ENCODE measurements at regions of chr17 and their contacts with region 1.

Region 1: DNA sequence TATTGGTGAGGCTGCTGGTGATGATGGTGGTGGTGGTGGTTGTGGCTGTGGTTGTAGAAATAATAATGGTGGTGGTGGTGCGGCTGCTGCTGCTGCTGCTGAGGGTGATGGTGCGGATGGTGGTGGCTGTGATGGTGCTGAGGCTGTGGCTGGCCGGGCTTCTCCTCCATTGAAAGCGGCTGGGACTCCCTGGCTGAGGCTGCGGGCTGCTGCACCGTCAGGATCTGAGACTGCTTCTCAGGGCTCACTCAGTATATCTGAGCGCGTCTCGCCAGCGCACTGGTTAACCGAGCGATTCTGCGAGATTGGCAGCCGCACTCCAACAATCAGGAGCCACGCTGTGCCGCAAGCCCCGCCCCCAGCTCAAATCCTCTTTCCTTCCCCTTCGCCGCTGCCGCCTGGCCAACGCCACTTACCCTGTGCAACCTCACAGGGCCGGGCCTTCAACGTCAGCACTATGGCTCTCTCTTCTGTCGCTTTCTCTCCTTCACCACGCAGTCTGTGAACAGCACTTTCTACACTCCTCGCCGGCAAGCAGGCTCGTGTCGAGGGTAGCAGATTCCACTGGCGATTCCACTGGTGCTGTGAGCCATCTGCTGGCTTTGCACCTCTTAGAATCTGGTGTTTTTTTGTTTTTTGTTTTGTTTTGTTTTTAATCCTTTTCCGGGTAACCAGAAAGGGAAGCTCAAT is at the start of gene NUFIP2:
- DNase-seq: peak; percentile 99
- ATAC-seq: peak; percentile 91 to 94
- H3K4me3 ChIP-seq: peak within 1 kb of the TSS; percentile 88 to 97 (median 95)
- H3K27ac ChIP-seq: peak within 1 kb of the TSS; percentile 95 to 100 (median 100)
- H3K4me1 ChIP-seq: peaks cover 26 to 30% of the 10 kb centered on the region in 2 donors
- H3K27me3 ChIP-seq: no peaks in the 10 kb centered on the region
- CTCF ChIP-seq: peak in 1 of 5 experiments; percentile 11
- POLR2A ChIP-seq: peak; percentile 100
- total RNA-seq, gene NUFIP2: 20.0 to 33.7 (median 27.8) TPM

Region 2: GRCh38 chr17:28644985-28645939 is 648.8 kb before region 1 on chr17 and contains the start of gene BLTP2:
- in situ Hi-C with region 1: no loop called
- intact Hi-C with region 1: loop called (anchors 1 kb)
- DNase-seq: peak; percentile 95
- ATAC-seq: peak; percentile 87 to 88
- H3K4me3 ChIP-seq: peak within 1 kb of the TSS; percentile 90 to 92 (median 92)
- H3K27ac ChIP-seq: peak within 1 kb of the TSS; percentile 90 to 98 (median 96)
- H3K4me1 ChIP-seq: peaks cover 29 to 33% of the 10 kb centered on the region in 2 donors
- H3K27me3 ChIP-seq: no peaks in the 10 kb centered on the region
- CTCF ChIP-seq: peak in 3 of 5 experiments; percentile 10 to 29 (median 13)
- POLR2A ChIP-seq: peak; percentile 92 to 94
- total RNA-seq, gene BLTP2: 71.6 to 93.4 (median 81.0) TPM

Region 3: GRCh38 chr17:29148790-29149430 is 145.1 kb before region 1 on chr17:
- in situ Hi-C with region 1: loop called in 3 of 4 experiments (anchors 5 to 25 kb)
- intact Hi-C with region 1: loop called (anchors 1 kb)
- DNase-seq: peak; percentile 89 to 95
- ATAC-seq: peak; percentile 77 to 85
- H3K4me3 ChIP-seq: peak overlapping the region; percentile 61 to 80 (median 66)
- H3K27ac ChIP-seq: peak overlapping the region; percentile 82 to 98 (median 84)
- H3K4me1 ChIP-seq: peaks cover 27 to 38% of the 10 kb centered on the region in 2 donors
- H3K27me3 ChIP-seq: no peaks in the 10 kb centered on the region
- CTCF ChIP-seq: peak; percentile 97 to 100 (median 98)
- POLR2A ChIP-seq: peak; percentile 42 to 51

Region 4: DNA sequence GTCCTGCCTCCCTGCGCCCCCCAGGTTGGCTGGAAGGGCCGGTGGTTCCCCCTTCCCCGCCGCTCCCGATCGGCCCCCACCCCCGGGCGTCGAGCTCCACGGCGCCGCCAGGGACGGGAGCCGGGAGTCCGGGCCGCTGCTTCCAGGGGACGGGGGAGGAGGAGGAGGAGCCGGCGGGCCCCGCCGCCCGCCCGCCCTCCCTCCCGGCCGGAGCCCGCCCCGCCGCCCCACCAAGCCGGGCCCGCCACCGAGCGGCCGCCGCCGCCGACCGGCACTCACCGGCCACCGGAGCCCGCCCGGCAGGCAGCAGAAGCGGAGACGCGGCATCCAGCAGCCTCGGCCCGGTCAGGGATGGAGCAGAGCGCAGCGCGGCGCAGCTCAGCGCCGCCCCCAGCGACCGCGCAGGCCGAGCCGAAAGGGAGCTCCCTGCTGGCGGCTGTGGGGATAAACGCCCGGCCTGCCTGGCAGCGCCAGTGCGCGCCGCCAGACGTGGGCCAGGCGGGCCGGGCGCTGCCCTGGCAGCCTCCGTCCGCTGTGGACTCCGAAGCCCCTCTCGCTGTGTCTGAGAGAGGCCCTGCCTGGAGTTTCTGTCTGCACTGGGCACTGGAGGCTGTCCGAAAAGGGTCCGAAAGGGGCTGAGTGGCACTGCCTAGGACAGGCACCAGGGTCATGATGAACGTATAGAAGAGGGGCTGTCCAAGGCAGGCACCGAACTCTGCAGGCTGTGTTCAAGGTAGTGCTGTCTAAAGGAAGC is 113.8 kb before region 1 on chr17 and contains the start of gene MYO18A:
- in situ Hi-C with region 1: no loop called
- intact Hi-C with region 1: loop called (anchors 2 kb)
- DNase-seq: peak; percentile 39 to 64
- ATAC-seq: peak; percentile 78 to 85
- H3K4me3 ChIP-seq: peak within 1 kb of the TSS; percentile 60 to 71 (median 62)
- H3K27ac ChIP-seq: peak within 1 kb of the TSS; percentile 75 to 88 (median 83)
- H3K4me1 ChIP-seq: peaks cover 21 to 26% of the 10 kb centered on the region in 2 donors
- H3K27me3 ChIP-seq: no peaks in the 10 kb centered on the region
- CTCF ChIP-seq: peak; percentile 70 to 95 (median 91)
- POLR2A ChIP-seq: peak in 1 of 2 donors; percentile 20
- total RNA-seq, gene MYO18A: 526 to 1,058 (median 835) TPM

Region 5: GRCh38 chr17:29389982-29390850 is 96.2 kb after region 1 on chr17 and contains the start of gene TAOK1:
- in situ Hi-C with region 1: no loop called
- intact Hi-C with region 1: loop called (anchors 2 kb)
- DNase-seq: peak; percentile 99
- ATAC-seq: peak; percentile 95 to 96
- H3K4me3 ChIP-seq: peak within 1 kb of the TSS; percentile 89 to 98 (median 97)
- H3K27ac ChIP-seq: peak within 1 kb of the TSS; percentile 89 to 100 (median 100)
- H3K4me1 ChIP-seq: peaks cover 36 to 49% of the 10 kb centered on the region in 2 donors
- H3K27me3 ChIP-seq: no peaks in the 10 kb centered on the region
- CTCF ChIP-seq: peak in 1 of 5 experiments; percentile 16
- POLR2A ChIP-seq: peak; percentile 96
- total RNA-seq, gene TAOK1: 30.1 to 48.4 (median 35.7) TPM

Measured in gastrocnemius medialis (tissue), 4 donors.